Natural killer cell (primary cell): ENCODE measurements at regions of chr12 and their contacts with region 1.

Region 1: DNA sequence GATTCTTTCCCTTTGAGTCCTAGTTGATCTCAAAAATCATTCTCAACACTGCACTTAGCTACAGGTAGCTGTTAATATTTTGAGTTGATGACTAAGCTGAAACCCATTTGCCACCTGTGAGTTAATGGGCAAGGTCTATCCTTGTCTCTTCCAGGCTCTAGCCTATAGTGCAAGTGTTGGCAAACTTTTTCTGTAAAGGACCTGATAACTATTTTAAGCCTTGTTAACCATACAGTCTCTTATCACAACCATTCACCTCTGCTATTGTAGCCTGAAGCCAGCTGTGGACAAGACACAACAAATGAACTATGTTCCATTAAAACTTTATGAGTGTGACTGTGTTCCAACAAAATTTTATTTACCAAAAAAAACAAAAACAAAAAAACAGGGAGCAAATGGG is 19.4 kb downstream of the RAP1B start:
- DNase-seq: no peak
- ATAC-seq: peak; percentile 19 to 48 (median 46)
- H3K4me3 ChIP-seq: no peak overlapping the region
- H3K4me3 Mint-ChIP-seq: peak overlapping the region; percentile 57
- H3K27ac ChIP-seq: peak overlapping the region; percentile 9
- H3K27ac Mint-ChIP-seq: peak overlapping the region; percentile 84 to 95
- H3K4me1 ChIP-seq: peaks cover 48% of the 10 kb centered on the region
- H3K4me1 Mint-ChIP-seq: peaks cover 89% of the 10 kb centered on the region in 2 donors
- H3K27me3 ChIP-seq: no peaks in the 10 kb centered on the region
- H3K27me3 Mint-ChIP-seq: no peaks in the 10 kb centered on the region
- CTCF ChIP-seq: no peak

Region 2: GRCh38 chr12:68557011-68557730 is 72.9 kb before region 1 on chr12:
- intact Hi-C with region 1: no loop called
- DNase-seq: no peak
- ATAC-seq: no peak
- H3K4me3 ChIP-seq: no peak overlapping the region
- H3K4me3 Mint-ChIP-seq: no peak overlapping the region
- H3K27ac ChIP-seq: no peak overlapping the region
- H3K27ac Mint-ChIP-seq: no peak overlapping the region
- H3K4me1 ChIP-seq: no peaks in the 10 kb centered on the region
- H3K4me1 Mint-ChIP-seq: peaks cover 20 to 22% of the 10 kb centered on the region in 2 donors
- H3K27me3 ChIP-seq: no peaks in the 10 kb centered on the region
- H3K27me3 Mint-ChIP-seq: no peaks in the 10 kb centered on the region
- CTCF ChIP-seq: no peak

Region 3: GRCh38 chr12:68617160-68617926 is 12.7 kb before region 1 on chr12:
- intact Hi-C with region 1: loop called (anchors 2 kb)
- DNase-seq: no peak
- ATAC-seq: peak in 1 of 3 donors; percentile 30
- H3K4me3 ChIP-seq: no peak overlapping the region
- H3K4me3 Mint-ChIP-seq: peak overlapping the region; percentile 69
- H3K27ac ChIP-seq: peak overlapping the region; percentile 24
- H3K27ac Mint-ChIP-seq: peak overlapping the region; percentile 84 to 95
- H3K4me1 ChIP-seq: peaks cover 44% of the 10 kb centered on the region
- H3K4me1 Mint-ChIP-seq: peaks cover 84% of the 10 kb centered on the region in 2 donors
- H3K27me3 ChIP-seq: no peaks in the 10 kb centered on the region
- H3K27me3 Mint-ChIP-seq: no peaks in the 10 kb centered on the region
- CTCF ChIP-seq: no peak